ENCODE measurements at regions of chr1 and their contacts with region 1.

Region 1: GRCh38 chr1:111025109-111025508 is 61.4 kb upstream of the LRIF1 start:
- DNase-seq: no peak
- H3K4me3 ChIP-seq: no peak overlapping the region
- H3K27ac ChIP-seq: no peak overlapping the region
- H3K4me1 ChIP-seq: no peaks in the 10 kb centered on the region
- H3K27me3 ChIP-seq: no peaks in the 10 kb centered on the region
- CTCF ChIP-seq: no peak
- POLR2A ChIP-seq: no peak

Region 2: DNA sequence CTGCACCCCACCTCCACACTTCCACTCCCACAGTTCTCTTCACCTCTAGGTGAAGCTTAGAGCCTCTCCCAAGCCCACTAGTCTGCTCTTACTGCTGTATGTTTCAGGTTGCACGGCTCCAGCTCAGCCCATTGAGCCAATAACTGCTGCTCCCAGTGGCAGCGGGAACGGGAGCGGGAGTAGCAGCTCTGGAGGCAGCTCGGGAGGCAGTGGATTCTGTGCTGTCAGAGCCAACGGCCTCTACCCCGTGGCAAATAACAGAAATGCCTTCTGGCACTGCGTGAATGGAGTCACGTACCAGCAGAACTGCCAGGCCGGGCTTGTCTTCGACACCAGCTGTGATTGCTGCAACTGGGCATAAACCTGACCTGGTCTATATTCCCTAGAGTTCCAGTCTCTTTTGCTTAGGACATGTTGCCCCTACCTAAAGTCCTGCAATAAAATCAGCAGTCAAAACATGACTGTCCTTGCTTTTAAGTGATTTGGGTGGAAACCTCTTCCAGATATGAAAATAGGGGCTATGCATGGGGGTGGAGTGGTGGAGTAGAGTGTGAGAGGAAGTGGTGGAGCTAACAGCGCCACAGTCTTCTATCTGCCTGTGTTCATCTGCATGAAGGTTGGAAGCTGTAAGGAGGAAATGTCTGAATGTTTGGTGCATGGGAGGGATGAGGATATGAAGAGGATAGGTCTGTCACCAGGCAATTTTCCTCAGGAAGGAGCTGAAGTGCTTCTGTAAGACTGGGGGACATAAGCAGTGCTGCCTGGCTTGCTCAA is 295.2 kb after region 1 on chr1:
- intact Hi-C with region 1: loop called (anchors 10 kb)
- DNase-seq: no peak
- H3K4me3 ChIP-seq: no peak overlapping the region
- H3K27ac ChIP-seq: no peak overlapping the region
- H3K4me1 ChIP-seq: no peaks in the 10 kb centered on the region
- H3K27me3 ChIP-seq: no peaks in the 10 kb centered on the region
- CTCF ChIP-seq: no peak
- POLR2A ChIP-seq: no peak

Measured in spleen (tissue), 13 donors.